Posterior vena cava (tissue), 2 donors: ENCODE measurements at regions of chr14 and their contacts with region 1.

Region 1: GRCh38 chr14:69090187-69090789 is 62.6 kb downstream of the DCAF5 start:
- DNase-seq: no peak

Region 2: DNA sequence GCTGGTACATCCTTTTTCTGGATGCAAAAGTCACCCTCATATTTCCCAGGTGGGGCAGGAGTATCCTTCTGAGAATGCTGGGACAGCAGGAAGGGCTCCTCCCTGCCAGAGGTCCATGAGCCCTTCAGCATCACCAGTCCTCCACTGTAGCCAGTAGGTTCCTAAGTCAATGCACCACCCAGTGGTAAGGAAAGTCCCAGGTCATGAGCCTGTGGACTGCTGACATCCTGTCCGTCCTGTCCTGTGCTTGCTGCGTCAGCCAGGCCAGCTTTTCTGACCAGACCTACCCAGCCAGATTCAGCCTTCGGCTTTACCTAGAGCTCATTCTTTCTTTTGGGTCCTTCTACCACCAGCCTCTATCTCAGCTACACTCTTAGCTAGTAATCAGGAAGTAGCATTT is 88.2 kb before region 1 on chr14:
- intact Hi-C with region 1: loop called in 1 of 2 experiments (anchors 5 kb)
- DNase-seq: no peak